WTC11 (cell line): ENCODE measurements at regions of chr9 and their contacts with region 1.

Region 1: GRCh38 chr9:114371973-114372917 is 15.5 kb downstream of the AKNA start:
- DNase-seq: no peak
- ATAC-seq: no peak
- H3K4me3 Mint-ChIP-seq: no peak overlapping the region
- H3K27ac Mint-ChIP-seq: peak overlapping the region; percentile 35; the same call in 1 of the 2 replicates
- H3K4me1 Mint-ChIP-seq: peaks cover 59% of the 10 kb centered on the region
- H3K27me3 Mint-ChIP-seq: no peaks in the 10 kb centered on the region
- CTCF ChIP-seq: no peak

Region 2: GRCh38 chr9:114356792-114357191 is 15.5 kb before region 1 on chr9:
- CTCF ChIA-PET with region 1: no interaction called
- POLR2A ChIA-PET with region 1: no interaction called
- DNase-seq: no peak
- ATAC-seq: no peak
- H3K4me3 Mint-ChIP-seq: no peak overlapping the region
- H3K27ac Mint-ChIP-seq: no peak overlapping the region
- H3K4me1 Mint-ChIP-seq: no peaks in the 10 kb centered on the region
- H3K27me3 Mint-ChIP-seq: no peaks in the 10 kb centered on the region
- CTCF ChIP-seq: no peak

Region 3: DNA sequence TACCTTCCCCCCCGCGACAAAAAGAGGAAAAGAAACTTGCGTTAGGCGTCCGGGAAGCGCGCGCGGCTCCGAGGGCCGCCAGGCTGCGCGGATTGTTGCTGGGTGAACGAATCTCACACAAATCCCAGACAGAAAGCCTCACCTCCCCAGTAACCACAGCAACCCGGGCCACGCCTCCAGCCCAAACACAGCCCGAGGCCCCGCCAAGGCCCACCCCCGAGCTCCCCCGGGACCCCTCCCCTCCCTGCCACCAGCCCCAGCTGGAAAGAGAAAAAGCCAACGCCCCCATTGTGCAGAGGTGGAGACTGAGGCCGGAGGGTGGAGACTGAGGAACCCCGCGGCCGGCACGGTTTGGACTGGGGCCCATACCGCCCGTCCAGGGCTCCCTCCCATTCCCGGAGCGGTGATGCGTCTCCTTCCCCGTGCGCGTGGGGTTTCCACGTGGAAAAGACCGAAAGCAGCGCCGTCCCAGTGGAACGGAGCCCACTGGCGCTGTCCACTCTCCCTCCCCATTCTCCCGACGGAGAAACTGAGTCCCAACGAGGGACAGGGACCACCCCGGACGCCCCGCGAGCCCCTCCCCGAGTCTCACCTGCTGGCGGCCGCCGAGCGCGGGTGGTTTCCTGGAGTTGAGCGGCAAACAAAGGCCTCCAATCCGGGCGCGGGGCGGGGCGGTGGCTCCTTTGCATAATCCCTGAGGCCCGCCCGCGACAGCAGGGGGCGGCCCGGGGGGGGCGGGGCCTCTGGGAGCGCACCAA is 25.8 kb after region 1 on chr9:
- CTCF ChIA-PET with region 1: no interaction called
- POLR2A ChIA-PET with region 1: interaction called, 13 read pairs
- DNase-seq: peak; percentile 98
- ATAC-seq: peak; percentile 87
- H3K4me3 Mint-ChIP-seq: peak overlapping the region; percentile 93
- H3K27ac Mint-ChIP-seq: peak overlapping the region; percentile 95
- H3K4me1 Mint-ChIP-seq: peaks cover 36% of the 10 kb centered on the region
- H3K27me3 Mint-ChIP-seq: no peaks in the 10 kb centered on the region
- CTCF ChIP-seq: no peak